ENCODE measurements at regions of chr3 and their contacts with region 1.

Region 1: GRCh38 chr3:9067352-9067975 is 104.2 kb upstream of the RAD18 start:
- DNase-seq: peak; percentile 41
- H3K4me3 ChIP-seq: no peak overlapping the region
- H3K27ac ChIP-seq: no peak overlapping the region
- H3K4me1 ChIP-seq: no peaks in the 10 kb centered on the region
- H3K27me3 ChIP-seq: no peaks in the 10 kb centered on the region
- CTCF ChIP-seq: peak; percentile 86 to 93 (median 90)
- EP300 ChIP-seq: no peak
- POLR2A ChIP-seq: no peak

Region 2: GRCh38 chr3:8987645-8988383 is 79.7 kb before region 1 on chr3:
- in situ Hi-C with region 1: loop called in 1 of 4 experiments (anchors 10 kb)
- intact Hi-C with region 1: loop called (anchors 5 kb)
- DNase-seq: peak; percentile 62
- H3K4me3 ChIP-seq: no peak overlapping the region
- H3K27ac ChIP-seq: no peak overlapping the region
- H3K4me1 ChIP-seq: peaks cover 0 to 9% (median 4%) of the 10 kb centered on the region in 4 donors
- H3K27me3 ChIP-seq: no peaks in the 10 kb centered on the region
- CTCF ChIP-seq: peak; percentile 63 to 76 (median 74)
- EP300 ChIP-seq: no peak
- POLR2A ChIP-seq: no peak

Region 3: DNA sequence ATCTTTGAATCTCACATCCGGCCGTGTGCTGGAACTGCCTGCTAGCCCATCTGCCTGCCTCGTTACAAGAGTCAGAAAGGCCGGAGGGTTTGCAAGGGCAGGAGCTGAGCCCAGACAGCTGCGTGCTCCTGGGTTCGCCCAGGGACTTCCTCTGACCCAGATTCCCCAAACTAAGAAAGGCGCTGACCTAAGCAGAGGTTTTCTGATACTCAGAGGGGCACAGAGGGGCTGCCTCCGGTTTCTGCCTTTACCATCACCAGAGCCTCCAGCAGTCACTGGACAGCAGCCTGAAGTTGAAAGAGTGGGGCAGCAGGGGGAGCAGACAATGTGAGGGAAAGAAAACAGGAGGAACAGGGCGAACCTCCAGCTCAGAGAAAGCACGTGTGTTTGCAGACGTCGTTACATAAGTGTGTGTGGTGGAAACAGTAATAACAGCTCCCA is 70.8 kb before region 1 on chr3:
- in situ Hi-C with region 1: loop called in 1 of 4 experiments (anchors 10 kb)
- intact Hi-C with region 1: no loop called
- DNase-seq: no peak
- H3K4me3 ChIP-seq: no peak overlapping the region
- H3K27ac ChIP-seq: peak overlapping the region in 1 of 4 donors; percentile 41
- H3K4me1 ChIP-seq: no peaks in the 10 kb centered on the region
- H3K27me3 ChIP-seq: no peaks in the 10 kb centered on the region
- CTCF ChIP-seq: peak in 3 of 5 experiments; percentile 10 to 22 (median 15)
- EP300 ChIP-seq: no peak
- POLR2A ChIP-seq: no peak

Region 4: DNA sequence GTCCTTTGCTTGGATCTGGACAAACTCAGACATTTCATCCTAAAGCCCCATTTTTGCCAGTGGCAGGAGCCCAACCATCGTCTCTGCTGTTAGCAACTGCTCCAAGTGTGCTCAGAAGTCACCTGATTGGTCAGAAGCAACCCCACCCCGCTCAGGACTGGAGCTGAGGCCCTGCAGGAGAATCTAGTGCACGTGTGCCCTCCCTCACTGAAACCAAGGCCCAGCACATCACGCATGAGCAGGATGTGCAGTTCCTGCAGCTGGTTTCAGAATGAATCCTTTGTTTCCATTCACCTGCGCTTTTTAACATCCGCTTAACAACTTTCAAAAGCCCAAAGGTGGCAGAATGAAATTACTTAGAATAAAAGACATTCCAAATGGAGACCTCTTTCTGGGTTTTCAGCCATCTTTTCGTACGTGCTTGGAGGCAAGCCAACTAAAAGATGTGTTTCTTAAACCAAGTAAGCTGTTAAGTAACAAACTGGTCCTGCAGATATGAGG is 100.8 kb after region 1 on chr3:
- in situ Hi-C with region 1: no loop called
- intact Hi-C with region 1: no loop called
- DNase-seq: peak; percentile 36
- H3K4me3 ChIP-seq: no peak overlapping the region
- H3K27ac ChIP-seq: no peak overlapping the region
- H3K4me1 ChIP-seq: peaks cover 0 to 4% (median 0%) of the 10 kb centered on the region in 4 donors
- H3K27me3 ChIP-seq: no peaks in the 10 kb centered on the region
- CTCF ChIP-seq: no peak
- EP300 ChIP-seq: no peak
- POLR2A ChIP-seq: no peak

Measured in transverse colon (tissue), 4 donors.